ENCODE measurements at regions of chr5 and their contacts with region 1.

Region 1: GRCh38 chr5:150517272-150518152 is 9.6 kb downstream of the NDST1 start:
- DNase-seq: peak; percentile 94
- H3K4me3 ChIP-seq: no peak overlapping the region
- H3K27ac ChIP-seq: peak overlapping the region; percentile 26
- H3K4me1 ChIP-seq: peaks cover 50% of the 10 kb centered on the region
- H3K27me3 ChIP-seq: no peaks in the 10 kb centered on the region
- CTCF ChIP-seq: no peak

Region 2: DNA sequence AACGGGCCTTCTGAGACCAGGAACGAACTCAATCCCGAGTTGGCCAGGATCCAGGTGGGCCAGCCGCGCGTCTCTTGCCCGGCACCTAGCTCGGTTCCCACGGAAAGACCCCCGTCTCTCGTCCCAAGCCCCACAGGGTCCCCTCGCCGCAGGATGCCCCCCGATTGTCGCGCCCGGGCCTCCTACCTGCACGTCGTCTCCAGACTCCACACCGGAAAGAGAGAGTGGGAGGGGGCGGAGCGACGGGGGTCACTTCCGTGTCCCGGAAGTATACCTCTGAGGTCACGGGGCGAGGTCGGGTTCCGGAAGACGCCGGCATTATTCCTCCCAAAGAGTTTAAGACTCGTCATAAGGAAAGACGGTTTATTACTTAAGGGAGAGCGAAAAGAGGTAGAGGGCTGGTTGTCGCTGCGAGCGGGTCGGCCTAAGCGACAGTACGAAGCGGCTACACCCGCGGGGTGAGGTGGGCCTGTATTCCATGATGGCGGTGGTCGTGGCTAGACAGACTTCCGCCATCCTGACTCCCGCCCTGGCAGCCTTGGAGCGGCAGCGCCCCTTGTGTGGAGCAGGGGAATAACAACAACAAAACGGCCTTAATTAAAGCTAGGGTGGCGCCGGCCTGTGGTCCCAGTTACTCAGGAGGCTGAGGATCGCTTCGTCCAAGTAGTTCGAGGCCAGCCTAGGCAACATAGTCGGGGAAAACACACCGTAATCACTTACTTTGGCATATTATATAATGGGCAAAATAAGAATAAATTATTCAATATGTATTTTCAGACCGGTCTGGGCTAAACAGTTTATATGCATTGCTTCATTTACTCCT is 67.8 kb before region 1 on chr5 and contains the start of gene RPS14:
- CTCF ChIA-PET with region 1: no interaction called
- dilution Hi-C with region 1: no loop called
- in situ Hi-C with region 1: no loop called
- intact Hi-C with region 1: no loop called
- DNase-seq: peak; percentile 94
- H3K4me3 ChIP-seq: peak within 1 kb of the TSS; percentile 79 to 86 (median 79)
- H3K27ac ChIP-seq: peak within 1 kb of the TSS; percentile 88
- H3K4me1 ChIP-seq: peaks cover 17% of the 10 kb centered on the region
- H3K27me3 ChIP-seq: no peaks in the 10 kb centered on the region
- CTCF ChIP-seq: peak; percentile 80 to 86
- total RNA-seq, gene RPS14: 1,819 to 2,158 TPM

Region 3: DNA sequence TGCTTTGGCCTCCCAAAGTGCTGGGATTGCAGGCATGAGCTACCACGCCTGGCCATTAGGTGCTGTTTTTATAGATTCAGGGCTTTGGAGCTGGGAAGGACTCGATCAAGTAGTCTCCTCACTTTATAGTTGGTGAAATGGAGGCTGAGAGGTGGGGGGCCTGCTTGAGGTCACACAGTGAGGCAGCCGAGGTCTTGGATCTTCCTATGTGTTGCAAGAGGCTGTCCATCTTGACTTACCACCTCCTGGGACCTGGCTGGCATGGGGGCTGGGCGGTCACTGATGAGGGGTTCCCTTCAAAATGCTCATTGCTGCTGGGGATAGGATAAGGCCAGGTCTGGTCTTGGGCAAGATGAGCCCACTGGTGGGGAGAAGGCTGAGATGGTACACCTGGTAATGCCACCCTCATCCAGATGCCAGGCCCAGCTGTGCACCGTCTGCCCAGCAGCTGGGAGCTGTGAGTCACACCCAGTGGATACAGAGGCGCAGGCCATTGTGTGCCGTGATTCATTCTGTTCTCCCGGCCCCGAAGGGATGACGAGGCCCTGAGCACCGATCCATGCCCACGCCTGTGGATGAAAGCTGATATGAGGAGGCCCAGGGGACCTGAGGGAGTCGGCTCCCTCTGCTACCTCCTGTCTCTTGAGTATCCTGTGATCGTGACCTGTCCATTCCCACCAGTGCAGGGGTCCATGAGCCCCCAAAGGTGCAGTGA is 20.1 kb before region 1 on chr5:
- CTCF ChIA-PET with region 1: no interaction called
- dilution Hi-C with region 1: no loop called
- in situ Hi-C with region 1: no loop called
- intact Hi-C with region 1: loop called (anchors 1 kb)
- DNase-seq: peak; percentile 96
- H3K4me3 ChIP-seq: peak overlapping the region; percentile 22 to 41 (median 35)
- H3K27ac ChIP-seq: peak overlapping the region; percentile 77
- H3K4me1 ChIP-seq: peaks cover 71% of the 10 kb centered on the region
- H3K27me3 ChIP-seq: no peaks in the 10 kb centered on the region
- CTCF ChIP-seq: no peak

Region 4: GRCh38 chr5:150589871-150590601 is 72.5 kb after region 1 on chr5:
- CTCF ChIA-PET with region 1: no interaction called
- dilution Hi-C with region 1: no loop called
- in situ Hi-C with region 1: no loop called
- intact Hi-C with region 1: no loop called
- DNase-seq: no peak
- H3K4me3 ChIP-seq: no peak overlapping the region
- H3K27ac ChIP-seq: no peak overlapping the region
- H3K4me1 ChIP-seq: no peaks in the 10 kb centered on the region
- H3K27me3 ChIP-seq: no peaks in the 10 kb centered on the region
- CTCF ChIP-seq: no peak

Measured in mammary epithelial cell (primary cell).